ENCODE measurements at regions of chr1 and their contacts with region 1.

Region 1: GRCh38 chr1:42173155-42173933 is 8.8 kb upstream of the GUCA2A start:
- DNase-seq: peak; percentile 60 to 64
- ATAC-seq: peak; percentile 43 to 74 (median 68)
- H3K4me3 ChIP-seq: no peak overlapping the region
- H3K27ac ChIP-seq: peak overlapping the region; percentile 47 to 91 (median 86)
- H3K4me1 ChIP-seq: peaks cover 15 to 56% (median 48%) of the 10 kb centered on the region in 9 donors
- H3K27me3 ChIP-seq: no peaks in the 10 kb centered on the region
- CTCF ChIP-seq: peak; percentile 94 to 99 (median 98)

Region 2: DNA sequence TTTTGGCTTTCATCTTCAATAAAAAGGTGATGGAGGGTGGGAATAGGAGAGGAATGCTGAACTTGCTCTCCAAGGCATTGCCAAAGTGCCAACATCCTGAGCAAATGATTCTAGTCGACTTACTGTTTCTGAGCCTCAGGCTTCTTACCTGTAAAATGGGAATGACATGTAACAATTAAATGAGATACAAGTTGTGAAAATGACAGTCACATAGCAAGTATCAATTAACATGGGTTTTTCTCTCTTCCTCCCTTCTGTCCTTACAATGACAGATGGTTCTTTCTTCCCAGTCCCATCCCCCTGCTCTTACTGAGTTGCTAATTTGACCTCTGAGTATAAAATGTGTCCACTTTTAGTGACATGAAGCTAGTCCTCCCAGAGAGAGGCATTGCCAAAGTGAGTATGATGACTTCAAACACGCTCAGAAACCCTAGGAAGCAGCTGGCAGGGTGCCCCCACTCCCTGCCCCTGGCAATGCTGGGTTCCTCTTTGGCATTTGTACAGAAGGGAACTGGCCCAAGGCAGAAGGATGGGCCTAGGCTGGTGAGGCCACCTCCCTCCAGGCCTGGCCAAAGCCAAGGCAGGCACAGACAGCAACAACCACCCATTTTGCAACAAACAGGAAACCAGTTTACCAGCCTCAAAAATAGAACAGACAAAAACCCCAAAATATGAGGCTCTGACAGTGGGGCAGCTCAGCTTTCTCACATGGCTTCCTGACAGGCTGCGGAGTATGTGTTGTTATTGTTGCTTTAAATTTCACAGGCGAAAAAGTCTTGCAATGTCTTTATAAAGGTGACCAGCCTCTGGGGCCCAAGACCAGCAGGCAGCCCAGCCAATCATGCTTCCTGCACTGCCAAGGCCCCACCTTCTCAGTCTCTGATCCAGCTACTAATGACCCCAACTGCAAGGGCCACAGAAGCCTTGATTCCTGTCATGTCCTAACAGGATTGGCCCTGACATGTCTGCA is 370.5 kb before region 1 on chr1:
- intact Hi-C with region 1: loop called in 1 of 10 experiments (anchors 10 kb)
- DNase-seq: peak; percentile 53 to 73
- ATAC-seq: peak; percentile 54 to 80 (median 58)
- H3K4me3 ChIP-seq: no peak overlapping the region
- H3K27ac ChIP-seq: peak overlapping the region in 3 of 10 donors; percentile 34 to 82 (median 56)
- H3K4me1 ChIP-seq: peaks cover 3 to 64% (median 11%) of the 10 kb centered on the region in 9 donors
- H3K27me3 ChIP-seq: no peaks in the 10 kb centered on the region
- CTCF ChIP-seq: no peak

Region 3: GRCh38 chr1:41823471-41823870 is 349.9 kb before region 1 on chr1:
- intact Hi-C with region 1: loop called in 2 of 10 experiments (anchors 10 kb)
- DNase-seq: peak in 1 of 2 donors; percentile 40
- ATAC-seq: peak; percentile 55 to 95 (median 79)
- H3K4me3 ChIP-seq: no peak overlapping the region
- H3K27ac ChIP-seq: peak overlapping the region in 2 of 10 donors; percentile 2 to 41
- H3K4me1 ChIP-seq: peaks cover 9 to 35% (median 23%) of the 10 kb centered on the region in 9 donors
- H3K27me3 ChIP-seq: no peaks in the 10 kb centered on the region
- CTCF ChIP-seq: no peak

Region 4: DNA sequence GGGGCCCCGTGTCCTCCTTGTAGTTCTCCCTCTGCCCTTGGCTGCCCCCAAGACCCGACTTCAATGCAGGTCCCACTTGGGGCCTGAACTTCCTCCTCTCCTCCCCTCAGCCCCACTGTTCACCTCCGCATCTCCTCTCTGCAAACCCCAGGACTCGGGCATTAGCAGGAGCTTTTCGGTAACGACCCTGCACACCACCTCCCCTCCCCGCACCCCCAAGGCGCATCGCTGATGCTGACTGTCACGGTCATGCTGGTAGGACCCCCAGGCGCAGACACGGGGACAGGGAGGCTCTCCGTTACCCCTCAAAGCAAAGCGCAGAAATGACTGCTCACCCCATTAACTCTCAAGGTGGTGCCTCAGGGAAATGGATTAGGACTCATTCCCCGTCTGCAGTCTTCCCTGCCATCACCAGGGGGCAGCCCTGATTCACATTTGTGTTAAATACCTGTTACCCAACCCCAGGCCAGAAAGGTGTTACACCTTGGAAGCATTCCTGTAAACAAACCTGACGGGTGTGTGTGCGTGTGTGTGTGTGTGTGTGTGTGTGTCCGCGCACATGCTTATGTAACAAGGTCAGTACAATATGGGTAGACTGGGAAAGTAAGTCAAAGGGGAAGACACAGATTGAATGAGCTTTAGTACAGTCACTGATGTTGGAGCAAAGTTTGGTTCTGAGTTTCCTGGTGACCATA is 26.6 kb before region 1 on chr1:
- intact Hi-C with region 1: loop called in 5 of 10 experiments (anchors 1 to 2 kb)
- DNase-seq: peak; percentile 62 to 68
- ATAC-seq: peak; percentile 34 to 82 (median 68)
- H3K4me3 ChIP-seq: no peak overlapping the region
- H3K27ac ChIP-seq: no peak overlapping the region
- H3K4me1 ChIP-seq: peaks cover 0 to 8% (median 0%) of the 10 kb centered on the region in 9 donors
- H3K27me3 ChIP-seq: peaks cover 0 to 37% (median 18%) of the 10 kb centered on the region in 7 donors
- CTCF ChIP-seq: peak; percentile 69 to 81 (median 76)

Region 5: DNA sequence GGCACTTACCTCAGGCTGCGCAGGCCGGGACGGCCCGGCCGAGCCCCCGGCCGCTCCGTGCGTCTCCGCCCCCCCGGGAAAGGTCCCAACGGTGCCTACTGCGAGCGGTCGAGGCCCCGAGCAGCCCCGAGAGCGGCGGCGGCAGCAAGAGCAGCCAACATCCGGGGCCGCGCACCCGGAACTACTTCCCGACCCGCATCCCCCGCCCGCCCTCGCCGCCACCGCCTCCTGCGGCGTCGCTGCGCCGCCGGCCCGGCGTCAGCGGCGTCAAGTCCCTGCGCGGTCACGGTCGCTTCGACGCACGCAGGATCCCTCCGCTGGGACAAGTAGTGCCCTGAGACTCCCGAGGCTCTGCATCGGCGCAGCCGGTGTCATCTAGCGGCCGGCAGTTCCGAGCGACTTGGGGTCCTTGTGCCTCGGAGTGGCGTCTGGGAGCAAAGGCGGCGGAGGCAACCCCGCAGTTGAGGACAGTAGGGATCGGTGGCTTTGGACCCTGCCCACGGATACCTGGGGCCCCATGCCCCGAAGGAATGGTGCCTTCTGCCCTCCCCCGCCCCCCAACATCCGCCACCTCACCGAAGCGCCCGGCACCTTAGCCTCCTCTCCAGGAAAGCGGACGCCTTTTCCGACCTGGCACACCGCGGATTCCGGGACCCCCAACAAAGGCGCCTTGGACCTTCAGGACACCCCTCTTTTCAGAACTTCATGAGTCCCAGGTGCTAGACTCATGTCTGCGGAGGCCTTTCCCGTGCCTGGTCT is 161.9 kb after region 1 on chr1 and contains the start of gene FOXJ3:
- intact Hi-C with region 1: loop called in 8 of 10 experiments (anchors 5 to 10 kb)
- DNase-seq: peak; percentile 94 to 95
- ATAC-seq: peak; percentile 89 to 97 (median 95)
- H3K4me3 ChIP-seq: peak within 1 kb of the TSS; percentile 68 to 98 (median 92)
- H3K27ac ChIP-seq: peak within 1 kb of the TSS; percentile 88 to 97 (median 94)
- H3K4me1 ChIP-seq: peaks cover 4 to 51% (median 33%) of the 10 kb centered on the region in 9 donors
- H3K27me3 ChIP-seq: no peaks in the 10 kb centered on the region
- CTCF ChIP-seq: peak in 2 of 9 donors; percentile 1 to 5
- total RNA-seq, gene FOXJ3: 34.2 to 50.0 (median 41.6) TPM

Region 6: GRCh38 chr1:42469727-42470126 is 296.4 kb after region 1 on chr1:
- intact Hi-C with region 1: loop called in 2 of 10 experiments (anchors 5 to 10 kb)
- DNase-seq: no peak
- ATAC-seq: no peak
- H3K4me3 ChIP-seq: no peak overlapping the region
- H3K27ac ChIP-seq: no peak overlapping the region
- H3K4me1 ChIP-seq: no peaks in the 10 kb centered on the region
- H3K27me3 ChIP-seq: no peaks in the 10 kb centered on the region
- CTCF ChIP-seq: no peak